WTC11 (cell line): ENCODE measurements at regions of chr11 and their contacts with region 1.

Region 1: DNA sequence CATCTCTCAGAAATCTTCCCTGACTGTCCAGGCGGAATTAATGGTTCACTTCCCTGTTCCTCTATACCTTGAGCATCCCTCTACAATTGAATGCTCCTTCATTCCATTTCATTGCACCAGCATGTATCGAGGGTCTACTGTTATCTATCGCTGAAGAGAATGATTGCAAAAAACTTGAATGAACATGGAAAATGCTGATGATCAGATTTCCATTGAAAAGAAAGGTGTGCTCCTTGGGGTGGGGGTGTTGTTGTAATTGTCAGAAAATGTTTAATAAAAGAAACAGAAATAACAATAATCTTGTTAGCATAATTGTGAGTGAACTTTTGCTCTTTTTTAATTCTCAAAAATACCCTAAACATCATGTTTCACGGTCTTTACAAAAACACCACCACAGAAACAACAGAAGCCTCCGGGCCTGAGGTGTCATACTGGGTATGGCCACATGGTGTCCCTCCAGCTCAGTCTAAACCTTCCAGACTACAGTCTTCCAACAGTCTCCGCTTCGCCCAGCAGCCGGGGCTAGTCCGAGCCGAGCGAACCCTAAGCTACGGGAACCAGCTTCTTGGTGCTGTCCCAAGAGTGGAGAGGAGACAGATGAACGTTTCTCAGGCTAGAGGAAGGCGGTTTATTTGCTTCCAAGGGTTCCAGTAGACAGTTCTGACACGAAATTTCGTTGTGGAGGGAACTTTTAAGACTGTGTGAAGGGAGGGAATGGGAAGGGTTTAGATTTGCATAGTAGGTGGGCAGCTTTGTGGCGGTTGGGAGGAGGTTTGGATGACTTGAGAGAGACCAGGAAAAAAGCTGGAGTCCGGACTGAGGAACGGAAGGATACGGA is 75.8 kb upstream of the ZBED5 start:
- DNase-seq: peak; percentile 94
- ATAC-seq: peak; percentile 78
- H3K4me3 Mint-ChIP-seq: peak overlapping the region; percentile 84
- H3K27ac Mint-ChIP-seq: peak overlapping the region; percentile 73
- H3K4me1 Mint-ChIP-seq: peaks cover 20% of the 10 kb centered on the region
- H3K27me3 Mint-ChIP-seq: peaks cover 20% of the 10 kb centered on the region
- CTCF ChIP-seq: peak; percentile 85

Region 2: DNA sequence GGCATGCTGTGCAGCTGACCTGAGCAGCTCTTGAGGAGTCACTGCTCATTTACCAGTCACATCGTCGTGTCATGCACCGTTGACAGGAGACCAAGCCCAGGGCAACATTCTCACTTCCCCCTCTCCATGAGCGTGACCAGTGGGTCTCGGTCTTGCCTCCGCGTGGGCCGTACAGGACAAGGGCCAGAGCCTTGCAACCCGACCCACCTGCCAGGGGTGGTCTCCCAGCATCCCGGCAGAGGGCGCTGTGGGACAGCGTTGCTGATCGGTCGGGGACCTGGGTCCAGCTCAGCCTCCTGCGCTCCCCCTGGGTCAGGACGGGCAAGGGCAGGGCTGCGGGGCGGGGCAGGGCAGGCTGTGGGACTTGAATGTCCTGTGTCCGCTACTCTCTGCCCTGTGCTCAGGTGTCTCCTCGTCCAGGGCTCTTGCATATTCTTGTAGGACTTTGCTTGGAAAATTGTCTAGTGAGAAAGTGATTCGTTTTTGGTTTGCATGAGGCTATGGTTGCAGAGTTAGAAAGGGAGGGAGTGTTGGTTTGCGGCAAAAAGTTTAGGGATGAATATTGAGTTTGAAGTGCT is 141.2 kb before region 1 on chr11:
- CTCF ChIA-PET with region 1: interaction called, 50 read pairs
- POLR2A ChIA-PET with region 1: interaction called, 3 read pairs
- DNase-seq: peak; percentile 98
- ATAC-seq: peak; percentile 93
- H3K4me3 Mint-ChIP-seq: peak overlapping the region; percentile 27; the same call in 1 of the 2 replicates
- H3K27ac Mint-ChIP-seq: no peak overlapping the region
- H3K4me1 Mint-ChIP-seq: peaks cover 4% of the 10 kb centered on the region
- H3K27me3 Mint-ChIP-seq: peaks cover 3% of the 10 kb centered on the region; the same call in 1 of the 2 replicates
- CTCF ChIP-seq: peak; percentile 94

Region 3: DNA sequence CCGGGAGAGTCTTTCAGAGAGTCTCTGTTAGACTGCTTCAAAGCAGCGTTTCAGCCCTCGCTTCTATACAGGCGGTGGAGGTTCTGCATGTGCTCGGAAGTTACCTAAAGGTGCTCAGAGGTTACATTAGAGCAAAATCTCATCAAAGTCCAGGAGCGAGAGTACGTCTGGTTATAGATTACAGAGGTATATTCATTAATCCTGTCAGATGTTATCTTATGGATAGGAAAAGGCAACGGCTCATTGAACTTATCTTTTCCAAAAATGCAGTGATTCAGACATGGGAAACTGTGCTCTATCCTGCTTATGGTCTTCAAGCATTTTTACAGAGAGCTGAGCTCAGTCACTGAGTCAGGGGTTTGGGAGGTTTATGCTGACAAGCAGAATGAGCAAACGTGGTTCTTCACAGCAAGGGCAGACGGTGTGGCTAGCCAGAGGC is 66.8 kb before region 1 on chr11:
- CTCF ChIA-PET with region 1: no interaction called
- POLR2A ChIA-PET with region 1: no interaction called
- DNase-seq: no peak
- ATAC-seq: no peak
- H3K4me3 Mint-ChIP-seq: no peak overlapping the region
- H3K27ac Mint-ChIP-seq: no peak overlapping the region
- H3K4me1 Mint-ChIP-seq: peaks cover 8% of the 10 kb centered on the region; the same call in 1 of the 2 replicates
- H3K27me3 Mint-ChIP-seq: no peaks in the 10 kb centered on the region
- CTCF ChIP-seq: no peak

Region 4: GRCh38 chr11:10878408-10879214 is 55.1 kb before region 1 on chr11:
- CTCF ChIA-PET with region 1: interaction called, 22 read pairs
- POLR2A ChIA-PET with region 1: no interaction called
- DNase-seq: no peak
- ATAC-seq: peak; percentile 90
- H3K4me3 Mint-ChIP-seq: no peak overlapping the region
- H3K27ac Mint-ChIP-seq: no peak overlapping the region
- H3K4me1 Mint-ChIP-seq: peaks cover 9% of the 10 kb centered on the region
- H3K27me3 Mint-ChIP-seq: no peaks in the 10 kb centered on the region; the same call in 1 of the 2 replicates
- CTCF ChIP-seq: peak; percentile 47; the same call in 1 of the 2 replicates

Region 5: GRCh38 chr11:11000579-11001283 is 67.1 kb after region 1 on chr11:
- CTCF ChIA-PET with region 1: interaction called, 10 read pairs
- POLR2A ChIA-PET with region 1: no interaction called
- DNase-seq: no peak
- ATAC-seq: no peak
- H3K4me3 Mint-ChIP-seq: no peak overlapping the region
- H3K27ac Mint-ChIP-seq: no peak overlapping the region
- H3K4me1 Mint-ChIP-seq: no peaks in the 10 kb centered on the region
- H3K27me3 Mint-ChIP-seq: peaks cover 2% of the 10 kb centered on the region; the same call in 1 of the 2 replicates
- CTCF ChIP-seq: no peak

Region 6: DNA sequence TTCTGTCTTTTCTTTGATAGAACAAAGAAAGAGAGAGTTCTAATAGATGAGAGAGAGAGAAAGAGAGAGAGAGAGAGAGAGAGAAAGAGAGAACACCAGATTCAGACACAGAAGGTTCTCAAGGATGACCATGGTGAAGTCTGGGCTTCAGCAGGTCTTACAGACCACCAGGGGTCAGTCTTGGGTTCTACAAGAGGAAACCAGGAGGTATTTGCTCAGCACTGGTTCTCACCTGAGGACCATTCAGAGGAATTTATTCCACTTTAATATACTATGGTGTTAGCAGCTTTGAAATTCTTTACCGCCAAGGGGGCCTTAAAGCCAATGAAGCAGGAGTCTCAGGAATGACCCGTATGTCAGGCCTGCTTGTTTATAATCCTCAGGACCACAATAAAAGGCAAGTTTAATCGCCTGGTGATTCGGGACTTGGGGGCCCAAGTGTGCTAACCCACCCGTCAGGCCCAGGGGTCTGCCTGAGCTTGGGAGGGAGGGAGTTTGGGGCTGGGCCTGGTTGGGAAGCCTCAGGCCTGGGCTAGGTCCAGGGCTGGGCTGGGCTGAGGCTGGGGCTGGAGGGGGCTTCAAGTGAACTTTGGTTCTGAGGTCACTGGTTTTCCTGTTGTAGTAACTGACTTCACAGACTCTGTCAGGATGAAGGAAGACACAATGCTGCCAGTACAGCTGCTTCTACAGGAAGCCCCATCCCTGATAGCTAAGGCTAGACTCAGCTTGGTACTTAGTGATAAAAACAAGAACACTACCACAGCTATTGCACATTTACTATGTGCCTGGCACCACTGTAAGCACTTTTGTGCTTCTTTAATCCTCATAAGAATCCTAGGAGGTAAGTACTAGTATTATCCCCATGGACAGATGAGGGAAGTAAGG is 103.4 kb after region 1 on chr11:
- CTCF ChIA-PET with region 1: interaction called, 42 read pairs
- POLR2A ChIA-PET with region 1: no interaction called
- DNase-seq: peak; percentile 32
- ATAC-seq: peak; percentile 97
- H3K4me3 Mint-ChIP-seq: no peak overlapping the region
- H3K27ac Mint-ChIP-seq: no peak overlapping the region
- H3K4me1 Mint-ChIP-seq: peaks cover 3% of the 10 kb centered on the region; the same call in 1 of the 2 replicates
- H3K27me3 Mint-ChIP-seq: no peaks in the 10 kb centered on the region
- CTCF ChIP-seq: no peak; the same call in 1 of the 2 replicates

Region 7: GRCh38 chr11:11787305-11788062 is 853.8 kb after region 1 on chr11:
- CTCF ChIA-PET with region 1: interaction called, 15 read pairs
- POLR2A ChIA-PET with region 1: no interaction called
- DNase-seq: peak; percentile 79
- ATAC-seq: peak; percentile 94
- H3K4me3 Mint-ChIP-seq: no peak overlapping the region
- H3K27ac Mint-ChIP-seq: no peak overlapping the region
- H3K4me1 Mint-ChIP-seq: peaks cover 14% of the 10 kb centered on the region
- H3K27me3 Mint-ChIP-seq: no peaks in the 10 kb centered on the region
- CTCF ChIP-seq: peak; percentile 81